ENCODE measurements at regions of chr21 and their contacts with region 1.

Region 1: GRCh38 chr21:34807146-34807880 is 138.5 kb downstream of the CLIC6 start:
- DNase-seq: peak; percentile 87
- ATAC-seq: peak; percentile 91
- H3K4me3 Mint-ChIP-seq: peak overlapping the region; percentile 36
- H3K27ac Mint-ChIP-seq: peak overlapping the region; percentile 88
- H3K4me1 Mint-ChIP-seq: peaks cover 81% of the 10 kb centered on the region
- H3K27me3 Mint-ChIP-seq: no peaks in the 10 kb centered on the region
- CTCF ChIP-seq: no peak

Region 2: DNA sequence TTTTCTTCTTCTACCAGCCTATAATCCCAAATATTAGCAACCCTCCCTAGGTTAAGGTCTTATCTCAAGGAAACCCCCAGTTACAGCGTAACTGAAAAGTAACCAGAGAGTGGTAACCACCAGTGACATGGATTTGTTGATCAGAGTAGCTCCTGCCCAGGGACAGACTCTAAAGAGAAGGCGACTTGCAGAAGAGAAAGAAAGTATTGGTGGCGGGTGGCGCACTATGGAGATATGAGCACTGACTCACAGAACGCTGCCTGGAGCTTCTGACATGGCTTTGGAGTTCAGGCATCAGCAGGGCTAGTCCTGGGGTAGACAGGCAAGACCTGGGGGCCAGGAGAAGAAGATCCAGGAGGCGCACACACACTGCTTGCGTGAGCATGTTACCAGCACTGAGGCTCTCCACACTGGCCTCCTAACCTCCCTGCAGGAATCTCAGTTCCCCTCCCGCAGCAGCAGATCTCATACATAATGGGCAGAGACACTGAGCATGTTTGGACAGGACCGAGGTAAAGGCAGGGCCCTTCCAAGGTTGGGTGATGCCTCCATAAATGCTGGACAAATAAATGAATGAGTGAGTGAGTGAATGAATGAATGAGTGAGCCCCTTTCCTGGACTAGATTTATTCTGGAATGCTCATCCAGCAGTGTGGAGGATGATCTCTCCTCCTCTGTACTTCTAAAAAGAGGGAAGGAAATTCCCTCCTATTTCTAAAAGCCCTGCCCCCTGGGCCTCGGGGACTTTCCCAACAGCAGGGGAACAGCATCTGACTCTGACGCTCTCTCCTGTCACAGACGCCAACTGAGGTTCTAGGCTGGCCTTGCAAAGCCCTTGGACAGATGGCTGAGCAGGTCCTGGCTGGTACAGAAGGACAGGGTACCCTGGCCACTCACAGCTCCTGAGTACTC is 37.0 kb after region 1 on chr21:
- CTCF ChIA-PET with region 1: no interaction called
- POLR2A ChIA-PET with region 1: no interaction called
- intact Hi-C with region 1: loop called (anchors 5 kb)
- DNase-seq: no peak
- ATAC-seq: peak; percentile 34
- H3K4me3 Mint-ChIP-seq: no peak overlapping the region
- H3K27ac Mint-ChIP-seq: peak overlapping the region; percentile 26
- H3K4me1 Mint-ChIP-seq: peaks cover 40% of the 10 kb centered on the region
- H3K27me3 Mint-ChIP-seq: no peaks in the 10 kb centered on the region
- CTCF ChIP-seq: no peak

Measured in activated CD8-positive, alpha-beta T cell treated with anti-CD3 and anti-CD28 coated beads for 36 hours (primary cell).